ENCODE measurements at regions of chr21 and their contacts with region 1.

Region 1: DNA sequence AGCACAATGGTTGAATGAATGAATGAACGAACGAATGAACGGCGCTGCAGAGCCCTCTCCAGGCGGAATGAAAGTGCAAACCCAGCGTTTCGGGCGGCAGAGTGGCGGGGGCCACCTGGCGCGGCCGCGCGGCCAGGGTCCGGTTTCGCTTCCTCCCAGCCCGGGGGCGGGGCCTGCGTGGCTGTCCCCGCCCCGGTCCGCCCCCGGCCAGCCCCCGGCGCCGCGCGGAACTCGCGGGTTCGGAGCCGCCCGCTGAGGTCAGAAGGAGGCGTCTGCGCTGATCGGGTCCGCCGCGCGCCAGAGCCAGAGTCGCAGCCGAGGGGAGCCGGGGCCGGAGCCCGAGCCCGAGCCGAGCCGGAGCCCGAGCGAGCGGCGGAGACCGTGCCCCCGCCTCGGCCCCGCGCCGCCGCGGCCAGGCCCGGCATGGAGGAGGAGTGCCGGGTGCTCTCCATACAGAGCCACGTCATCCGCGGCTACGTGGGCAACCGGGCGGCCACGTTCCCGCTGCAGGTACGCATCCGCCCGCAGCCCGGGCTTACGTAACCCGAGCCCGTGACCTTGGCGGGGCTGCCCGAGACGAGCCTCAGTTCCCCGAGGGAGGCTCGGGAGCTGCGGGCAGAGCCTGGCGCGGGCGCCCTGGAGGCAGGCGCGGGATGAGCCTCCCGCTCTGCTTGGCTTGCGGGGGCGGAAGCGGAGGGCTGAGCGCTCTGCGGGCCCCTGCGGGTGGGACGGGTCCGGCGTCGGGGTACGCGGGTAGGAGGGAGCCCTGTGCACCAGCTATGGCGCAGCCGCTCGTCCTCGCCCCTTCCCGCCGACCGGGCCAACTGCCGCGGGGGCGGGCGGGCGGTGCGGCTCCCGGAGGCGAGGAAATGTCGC is at the start of gene PDXK:
- DNase-seq: peak; percentile 77 to 87
- H3K4me3 ChIP-seq: peak within 1 kb of the TSS; percentile 68 to 78
- H3K27ac ChIP-seq: peak within 1 kb of the TSS; percentile 61 to 77
- H3K4me1 ChIP-seq: peaks cover 3 to 14% of the 10 kb centered on the region in 2 donors
- H3K27me3 ChIP-seq: no peaks in the 10 kb centered on the region
- CTCF ChIP-seq: peak in 1 of 4 experiments; percentile 1
- POLR2A ChIP-seq: peak; percentile 85 to 91
- total RNA-seq, gene PDXK: 15.9 to 89.8 (median 49.8) TPM

Region 2: GRCh38 chr21:43775795-43776430 is 56.8 kb after region 1 on chr21 and contains the start of gene CSTB:
- intact Hi-C with region 1: loop called (anchors 10 kb)
- DNase-seq: peak; percentile 68 to 78
- H3K4me3 ChIP-seq: peak within 1 kb of the TSS; percentile 50 to 93
- H3K27ac ChIP-seq: peak within 1 kb of the TSS; percentile 80 to 84
- H3K4me1 ChIP-seq: no peaks in the 10 kb centered on the region
- H3K27me3 ChIP-seq: no peaks in the 10 kb centered on the region
- CTCF ChIP-seq: peak in 1 of 4 experiments; percentile 5
- POLR2A ChIP-seq: peak; percentile 58 to 65
- total RNA-seq, gene CSTB: 2.0 to 31.2 (median 5.6) TPM

Measured in uterus (tissue), 4 donors.